H1 (cell line): ENCODE measurements at regions of chr1 and their contacts with region 1.

Region 1: GRCh38 chr1:172105223-172105622 is 263.9 kb downstream of the DNM3 start:
- DNase-seq: no peak
- H3K4me3 ChIP-seq: no peak overlapping the region
- H3K27ac ChIP-seq: no peak overlapping the region
- H3K4me1 ChIP-seq: no peaks in the 10 kb centered on the region
- H3K27me3 ChIP-seq: no peaks in the 10 kb centered on the region
- CTCF ChIP-seq: no peak
- EP300 ChIP-seq: no peak
- POLR2A ChIP-seq: no peak
- RAD21 ChIP-seq: no peak

Region 2: DNA sequence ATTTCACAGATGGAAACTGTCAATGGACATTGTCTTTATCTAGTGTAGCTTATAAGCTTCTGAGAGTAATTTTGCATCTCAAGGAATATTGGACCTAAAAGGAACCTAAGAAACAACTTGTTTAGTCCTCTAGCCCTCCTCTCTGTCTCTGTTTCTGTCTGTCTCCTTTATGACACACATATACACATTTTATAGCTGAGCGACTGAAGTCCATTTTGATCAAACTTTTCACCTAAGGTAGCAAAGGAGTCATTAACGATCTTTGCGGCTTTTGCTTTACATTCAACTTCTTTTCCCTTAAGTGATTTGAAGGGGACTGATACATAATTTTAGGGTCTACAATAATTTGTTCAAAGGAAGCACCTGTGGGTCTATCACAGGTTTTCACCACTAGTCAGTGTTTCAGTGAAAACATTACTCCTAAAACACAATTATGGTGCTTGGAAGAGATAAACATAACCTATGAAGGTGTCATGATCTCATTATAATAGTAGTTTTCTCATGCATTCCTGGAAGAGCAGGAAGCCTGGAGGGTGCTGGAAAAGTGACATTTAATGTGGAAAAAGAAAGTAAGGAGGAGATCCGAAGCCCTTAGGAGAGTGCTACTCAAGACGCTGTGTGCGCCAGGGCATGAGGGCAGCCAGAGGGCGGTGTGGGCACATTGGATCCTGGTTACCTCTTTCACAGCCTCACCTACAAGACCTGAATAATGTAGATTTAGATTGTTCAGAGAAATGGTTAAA is 15.3 kb before region 1 on chr1:
- CTCF ChIA-PET with region 1: interaction called, 18 read pairs
- POLR2A ChIA-PET with region 1: no interaction called
- DNase-seq: peak; percentile 57 to 61
- H3K4me3 ChIP-seq: no peak overlapping the region
- H3K27ac ChIP-seq: no peak overlapping the region
- H3K4me1 ChIP-seq: peaks cover 0 to 5% (median 0%) of the 10 kb centered on the region in 4 experiments; a peak in 1 of 7 replicates
- H3K27me3 ChIP-seq: no peaks in the 10 kb centered on the region
- CTCF ChIP-seq: peak; percentile 87 to 96 (median 93)
- EP300 ChIP-seq: no peak
- POLR2A ChIP-seq: no peak
- RAD21 ChIP-seq: peak; percentile 92 to 94

Region 3: GRCh38 chr1:172119184-172119583 is 14.0 kb after region 1 on chr1:
- CTCF ChIA-PET with region 1: no interaction called
- POLR2A ChIA-PET with region 1: no interaction called
- DNase-seq: no peak
- H3K4me3 ChIP-seq: no peak overlapping the region
- H3K27ac ChIP-seq: no peak overlapping the region
- H3K4me1 ChIP-seq: no peaks in the 10 kb centered on the region
- H3K27me3 ChIP-seq: no peaks in the 10 kb centered on the region
- CTCF ChIP-seq: no peak
- EP300 ChIP-seq: no peak
- POLR2A ChIP-seq: no peak
- RAD21 ChIP-seq: no peak

Region 4: DNA sequence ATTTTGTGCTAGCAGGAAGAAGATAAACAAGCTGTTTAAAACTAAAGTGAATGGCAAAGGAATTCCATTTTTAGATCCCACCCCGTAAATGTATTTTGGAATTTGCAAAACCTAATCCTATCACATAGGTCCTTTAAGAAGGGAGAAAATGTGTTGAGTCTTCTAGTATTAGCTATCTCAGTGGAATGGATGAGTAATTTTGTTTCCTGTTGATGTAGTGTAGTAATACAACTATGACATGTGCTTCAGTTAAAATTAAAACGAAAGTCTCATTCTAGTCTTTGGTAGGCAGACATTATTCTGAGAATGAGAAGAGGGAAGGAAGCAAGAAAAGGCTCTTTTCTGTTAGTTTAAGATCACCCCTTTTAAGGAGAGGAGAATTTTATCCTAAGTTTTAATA is 49.3 kb after region 1 on chr1:
- CTCF ChIA-PET with region 1: no interaction called
- POLR2A ChIA-PET with region 1: no interaction called
- DNase-seq: no peak
- H3K4me3 ChIP-seq: no peak overlapping the region
- H3K27ac ChIP-seq: no peak overlapping the region
- H3K4me1 ChIP-seq: no peaks in the 10 kb centered on the region
- H3K27me3 ChIP-seq: no peaks in the 10 kb centered on the region
- CTCF ChIP-seq: no peak
- EP300 ChIP-seq: no peak
- POLR2A ChIP-seq: no peak
- RAD21 ChIP-seq: no peak